Dendritic cell treated with granulocyte-macrophage colony-stimulating factor and Interleukin-4, amounts not matched to agents 40 ng/mL and 50 ng/mL, for 4 days (primary cell): ENCODE measurements at regions of chr16 and their contacts with region 1.

Region 1: DNA sequence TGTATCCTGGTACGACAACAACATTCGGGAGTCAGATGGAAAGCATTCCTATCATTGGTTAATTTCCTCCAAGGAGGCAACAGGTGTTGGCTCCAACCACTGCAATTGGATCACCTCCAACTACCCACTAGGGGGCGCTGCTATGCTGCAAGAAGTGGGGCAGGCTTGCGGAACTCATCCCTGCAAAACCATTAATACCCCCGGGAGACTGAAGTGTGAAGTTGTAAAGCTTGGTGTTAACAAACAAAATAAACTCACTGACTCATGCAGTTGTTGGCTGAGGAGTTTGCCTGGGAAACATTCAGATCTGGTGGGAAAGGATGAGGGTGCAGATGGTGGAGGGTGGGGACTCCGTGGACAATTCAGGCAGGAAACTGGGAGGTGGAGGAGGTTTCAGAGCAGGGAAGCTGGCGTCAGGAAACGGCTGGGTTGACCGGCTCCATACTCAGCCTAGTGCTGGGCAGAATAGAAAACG is 84.9 kb downstream of the HS3ST2 start:
- H3K4me3 Mint-ChIP-seq: no peak overlapping the region
- H3K27ac Mint-ChIP-seq: no peak overlapping the region
- H3K4me1 Mint-ChIP-seq: no peaks in the 10 kb centered on the region
- H3K27me3 Mint-ChIP-seq: peaks cover 26% of the 10 kb centered on the region

Region 2: GRCh38 chr16:22888791-22889190 is 10.1 kb before region 1 on chr16:
- intact Hi-C with region 1: no loop called
- H3K4me3 Mint-ChIP-seq: no peak overlapping the region
- H3K27ac Mint-ChIP-seq: no peak overlapping the region
- H3K4me1 Mint-ChIP-seq: no peaks in the 10 kb centered on the region
- H3K27me3 Mint-ChIP-seq: peaks cover 11% of the 10 kb centered on the region

Region 3: DNA sequence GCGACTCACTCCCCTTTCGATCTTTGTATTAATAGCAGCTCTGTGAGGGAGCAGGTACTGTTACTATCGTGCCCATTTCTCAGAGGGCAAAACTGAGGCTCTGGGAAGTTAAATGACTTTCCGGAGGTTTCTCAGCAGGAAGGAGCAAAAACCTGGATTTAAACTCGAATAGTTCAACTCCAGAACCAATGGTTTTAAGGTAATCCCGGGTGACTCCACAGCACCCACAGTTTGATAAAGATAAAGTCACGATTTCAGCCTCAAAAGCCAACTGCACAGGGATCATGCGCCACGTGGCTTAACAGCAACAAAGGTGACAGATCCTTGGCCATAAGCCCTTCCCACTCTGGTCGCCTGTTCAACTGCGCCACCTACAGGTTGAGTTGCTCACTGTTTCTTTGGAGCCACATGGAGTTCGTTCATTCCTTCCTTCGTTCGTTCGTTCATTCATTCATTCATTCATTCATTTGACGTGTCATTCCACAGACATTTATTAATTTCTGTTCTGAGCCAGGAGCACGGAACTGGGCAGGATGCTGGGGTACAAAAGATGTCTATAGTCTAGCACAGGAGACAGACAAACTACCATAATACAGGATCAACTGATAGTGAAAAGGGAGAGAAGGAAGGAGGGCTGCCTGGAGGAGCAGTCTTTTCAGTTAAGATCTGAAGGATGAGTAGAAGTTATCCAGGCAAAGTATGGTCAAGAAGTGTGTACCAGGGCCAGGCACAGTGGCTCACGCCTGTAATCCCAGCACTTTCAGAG is 49.9 kb after region 1 on chr16:
- intact Hi-C with region 1: loop called (anchors 1 kb)
- H3K4me3 Mint-ChIP-seq: no peak overlapping the region
- H3K27ac Mint-ChIP-seq: no peak overlapping the region
- H3K4me1 Mint-ChIP-seq: peaks cover 10% of the 10 kb centered on the region
- H3K27me3 Mint-ChIP-seq: peaks cover 45% of the 10 kb centered on the region

Region 4: GRCh38 chr16:23060458-23061320 is 161.8 kb after region 1 on chr16:
- intact Hi-C with region 1: loop called (anchors 2 kb)
- H3K4me3 Mint-ChIP-seq: no peak overlapping the region
- H3K27ac Mint-ChIP-seq: no peak overlapping the region
- H3K4me1 Mint-ChIP-seq: peaks cover 6% of the 10 kb centered on the region
- H3K27me3 Mint-ChIP-seq: peaks cover 18% of the 10 kb centered on the region

Region 5: DNA sequence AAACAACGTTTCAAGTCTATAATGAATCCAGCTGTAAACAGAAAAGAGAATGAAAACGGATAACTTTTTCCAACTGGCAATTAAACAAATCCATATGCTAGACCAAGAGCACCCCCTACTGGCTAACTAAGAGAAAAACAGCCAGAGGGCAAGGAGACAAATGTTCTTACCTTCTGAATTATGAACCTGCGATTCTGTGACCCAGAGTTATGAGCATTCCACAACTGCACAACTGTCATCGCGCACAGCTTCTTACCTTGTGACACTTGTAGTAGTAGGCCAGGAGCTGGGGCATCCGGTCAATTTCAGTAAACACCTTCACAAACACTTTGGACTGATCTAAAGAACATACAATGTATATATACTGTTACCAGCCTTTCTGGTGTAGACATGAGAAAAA is 535.5 kb after region 1 on chr16:
- intact Hi-C with region 1: loop called (anchors 5 kb)
- H3K4me3 Mint-ChIP-seq: no peak overlapping the region
- H3K27ac Mint-ChIP-seq: no peak overlapping the region
- H3K4me1 Mint-ChIP-seq: peaks cover 9% of the 10 kb centered on the region
- H3K27me3 Mint-ChIP-seq: no peaks in the 10 kb centered on the region